ENCODE measurements at regions of chr17 and their contacts with region 1.

Region 1: GRCh38 chr17:50783193-50783660 is 15.9 kb upstream of the ANKRD40CL start:
- DNase-seq: peak; percentile 89
- CTCF ChIP-seq: peak; percentile 99

Region 2: DNA sequence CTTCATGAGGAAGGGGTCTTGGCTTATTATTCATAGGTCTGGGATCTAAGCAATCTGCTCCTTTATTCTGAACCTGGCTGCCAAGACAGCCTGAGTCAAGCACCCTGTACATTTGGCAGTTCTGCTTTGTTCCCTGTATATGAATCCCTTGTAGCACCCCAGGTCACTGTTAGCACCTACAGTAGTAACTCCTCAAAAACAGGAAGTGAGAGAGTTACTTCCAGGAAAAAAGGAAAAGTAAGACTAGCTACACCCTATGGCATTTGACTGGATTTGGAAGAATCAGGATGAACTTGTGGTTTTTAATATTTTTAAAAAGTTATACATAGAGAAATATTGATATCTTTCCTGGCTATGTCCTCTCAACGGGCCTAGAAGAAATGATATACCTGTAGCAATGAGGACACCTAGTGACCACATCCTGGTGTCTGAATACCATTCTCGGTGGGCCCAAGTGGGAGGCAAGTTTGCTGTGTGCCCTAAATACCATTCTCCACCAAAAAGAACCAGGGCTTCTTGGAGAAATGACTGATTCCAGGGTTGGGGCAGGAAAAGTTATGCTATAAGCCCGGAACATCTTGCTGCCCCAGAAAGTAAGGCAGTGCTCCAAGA is 85.5 kb before region 1 on chr17:
- CTCF ChIA-PET with region 1: no interaction called
- POLR2A ChIA-PET with region 1: no interaction called
- DNase-seq: no peak
- CTCF ChIP-seq: no peak

Region 3: DNA sequence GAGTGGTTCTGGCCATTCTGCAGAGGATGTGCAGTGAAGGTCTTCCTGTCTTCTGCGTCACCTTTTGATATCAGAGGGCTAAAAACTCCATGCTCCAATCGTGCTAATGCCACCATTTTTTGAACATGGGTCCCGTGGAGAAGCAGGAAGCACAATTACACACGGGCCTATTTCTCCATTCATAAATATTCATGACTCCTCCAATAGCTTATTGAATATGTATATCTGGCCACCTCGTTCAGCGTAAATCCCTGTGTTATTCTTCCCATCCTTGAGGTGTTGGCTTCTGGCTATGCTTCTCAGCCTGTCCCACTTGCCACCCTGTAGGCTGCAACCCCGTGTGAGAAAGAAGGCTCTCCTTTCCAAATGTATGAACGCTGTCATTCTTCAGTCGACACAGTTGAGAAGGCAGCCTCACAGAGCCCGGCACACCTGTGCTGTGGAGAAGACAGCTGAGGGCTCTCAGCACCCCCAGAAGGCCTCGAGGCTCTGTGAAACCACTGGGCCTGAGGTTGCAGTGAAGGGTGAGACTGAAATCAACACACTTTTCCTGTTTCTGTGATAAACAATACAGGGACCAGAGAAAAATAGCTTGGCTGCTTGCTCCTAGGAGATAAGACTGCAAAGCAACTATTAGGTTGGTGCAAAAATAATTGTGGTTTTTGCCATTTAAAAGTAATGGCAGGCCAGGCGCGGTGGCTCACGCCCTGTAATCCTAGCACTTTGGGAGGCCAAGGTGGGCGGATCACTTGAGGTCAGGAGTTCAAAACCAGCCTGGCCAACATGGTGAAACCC is 11.0 kb before region 1 on chr17:
- CTCF ChIA-PET with region 1: interaction called, 85 read pairs
- POLR2A ChIA-PET with region 1: no interaction called
- DNase-seq: peak; percentile 32
- CTCF ChIP-seq: no peak

Region 4: DNA sequence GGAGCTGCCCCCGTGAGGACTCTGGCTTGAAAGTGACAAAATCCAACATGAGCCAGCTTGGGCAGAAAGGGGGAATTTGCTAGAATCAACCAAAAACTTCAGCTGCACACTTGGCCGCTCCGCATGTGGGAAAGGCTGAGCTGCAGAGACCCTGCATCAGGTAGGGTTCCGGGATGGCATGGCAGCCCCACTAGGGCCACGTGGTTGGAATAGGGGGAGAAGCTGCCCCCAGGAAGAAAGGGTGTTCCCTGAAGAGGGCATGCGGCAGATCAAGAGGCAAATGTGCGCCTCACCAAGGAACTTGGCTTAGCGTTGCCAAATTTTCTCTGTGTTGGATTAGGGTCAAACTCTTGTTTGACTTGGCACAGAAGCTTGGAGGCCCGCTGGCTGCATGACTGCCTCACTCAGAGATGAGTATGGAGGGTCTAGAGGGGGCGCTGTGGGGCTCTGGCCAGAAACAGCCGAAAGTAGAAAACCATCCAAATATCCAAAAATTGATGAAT is 23.0 kb after region 1 on chr17:
- CTCF ChIA-PET with region 1: interaction called, 15 read pairs
- POLR2A ChIA-PET with region 1: no interaction called
- DNase-seq: no peak
- CTCF ChIP-seq: no peak

Region 5: GRCh38 chr17:50822550-50822949 is 39.3 kb after region 1 on chr17:
- CTCF ChIA-PET with region 1: interaction called, 65 read pairs
- POLR2A ChIA-PET with region 1: no interaction called
- DNase-seq: no peak
- CTCF ChIP-seq: no peak

Region 6: GRCh38 chr17:50841949-50842354 is 58.7 kb after region 1 on chr17:
- CTCF ChIA-PET with region 1: interaction called, 301 read pairs
- POLR2A ChIA-PET with region 1: no interaction called
- DNase-seq: peak; percentile 84
- CTCF ChIP-seq: peak; percentile 70

Region 7: GRCh38 chr17:50949989-50950881 is 167.0 kb after region 1 on chr17:
- CTCF ChIA-PET with region 1: interaction called, 28 read pairs
- POLR2A ChIA-PET with region 1: no interaction called
- DNase-seq: peak; percentile 79
- CTCF ChIP-seq: peak; percentile 89